Left cardiac atrium (tissue), 4 donors: ENCODE measurements at regions of chr5 and their contacts with region 1.

Region 1: DNA sequence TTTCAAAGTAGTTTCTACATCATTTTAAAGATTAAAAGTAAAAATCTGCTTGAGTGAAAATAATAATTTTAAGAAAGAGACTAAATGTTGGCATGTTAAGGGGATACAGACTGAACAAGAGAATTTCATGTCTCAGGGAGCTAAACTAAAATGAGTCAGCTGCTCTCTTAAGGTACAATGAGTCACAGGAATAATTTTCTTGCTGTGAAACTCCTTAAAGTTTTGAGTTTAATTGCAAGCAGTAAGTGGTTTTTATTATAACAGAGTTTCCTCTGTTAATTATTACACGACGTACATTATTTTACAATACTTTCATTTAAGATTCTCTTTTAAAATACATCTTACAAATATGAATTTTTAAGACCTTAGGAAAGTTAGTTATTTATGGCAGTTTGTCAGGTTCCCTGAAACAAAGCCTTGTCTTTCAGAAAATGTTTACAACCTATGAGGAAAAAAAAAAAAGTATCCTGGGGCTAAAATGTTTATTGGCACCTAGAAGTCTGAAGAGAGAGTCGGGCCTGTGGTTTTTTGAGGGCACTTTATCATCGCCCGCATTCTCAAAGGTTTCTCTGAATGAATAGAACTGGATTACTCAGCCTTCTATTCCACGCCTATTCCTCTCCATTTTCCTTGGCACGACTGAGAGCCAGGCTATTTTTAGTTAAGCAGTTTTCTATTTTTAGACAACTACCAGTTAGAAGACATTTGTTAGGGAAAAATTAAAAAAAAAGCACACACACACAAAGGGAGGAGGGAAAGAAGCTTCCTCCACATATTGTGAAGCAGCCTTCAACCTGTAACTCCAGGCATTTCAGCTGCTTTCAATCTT is 97.4 kb downstream of the MEF2C start:
- DNase-seq: peak; percentile 25
- ATAC-seq: peak; percentile 93 to 96

Region 2: GRCh38 chr5:88634014-88634413 is 151.6 kb before region 1 on chr5:
- intact Hi-C with region 1: no loop called
- DNase-seq: no peak
- ATAC-seq: no peak

Region 3: DNA sequence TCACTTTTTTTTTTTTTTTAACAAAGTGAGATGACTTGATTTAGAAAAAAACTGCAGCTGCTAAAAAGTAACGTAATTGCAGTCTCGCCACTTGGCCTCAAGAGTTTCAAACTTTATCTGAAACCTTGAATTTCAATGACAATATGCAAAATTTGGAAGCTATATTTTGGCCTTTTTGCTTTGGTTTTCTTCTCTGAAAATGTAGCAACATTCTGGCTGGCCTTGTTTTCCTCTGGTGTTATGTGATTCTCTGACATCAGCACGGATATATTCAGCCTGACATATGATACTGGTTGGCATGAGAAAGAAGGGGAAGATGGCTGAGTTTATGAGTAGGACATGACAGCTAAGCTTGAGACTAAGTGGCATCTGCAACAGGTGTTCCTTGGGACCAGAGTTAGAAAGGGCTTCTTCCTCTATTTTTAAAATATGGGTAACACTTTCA is 39.1 kb before region 1 on chr5:
- intact Hi-C with region 1: no loop called
- DNase-seq: no peak
- ATAC-seq: peak in 1 of 2 donors; percentile 49

Region 4: GRCh38 chr5:88826646-88827585 is 41.3 kb after region 1 on chr5:
- intact Hi-C with region 1: loop called in 1 of 2 experiments (anchors 5 kb)
- DNase-seq: peak; percentile 45
- ATAC-seq: peak; percentile 80 to 87